ENCODE measurements at regions of chr22 and their contacts with region 1.

Region 1: GRCh38 chr22:46774253-46774979 is 12.0 kb downstream of the TBC1D22A start:
- DNase-seq: peak; percentile 84
- ATAC-seq: peak; percentile 64
- H3K4me3 ChIP-seq: peak overlapping the region; percentile 21 to 49 (median 37)
- H3K4me3 Mint-ChIP-seq: peak overlapping the region; percentile 79
- H3K27ac ChIP-seq: peak overlapping the region; percentile 87 to 91
- H3K27ac Mint-ChIP-seq: peak overlapping the region; percentile 93
- H3K4me1 ChIP-seq: peaks cover 93% of the 10 kb centered on the region in 2 donors
- H3K4me1 Mint-ChIP-seq: peaks cover 89% of the 10 kb centered on the region
- H3K27me3 ChIP-seq: no peaks in the 10 kb centered on the region
- H3K27me3 Mint-ChIP-seq: no peaks in the 10 kb centered on the region
- CTCF ChIP-seq: no peak

Region 2: GRCh38 chr22:46791201-46791731 is 16.9 kb after region 1 on chr22:
- CTCF ChIA-PET with region 1: interaction called, 4 read pairs
- POLR2A ChIA-PET with region 1: interaction called, 3 read pairs
- intact Hi-C with region 1: loop called (anchors 1 kb)
- DNase-seq: peak; percentile 70
- ATAC-seq: peak; percentile 95
- H3K4me3 ChIP-seq: peak overlapping the region in 2 of 5 experiments; percentile 3 to 37
- H3K4me3 Mint-ChIP-seq: peak overlapping the region; percentile 85
- H3K27ac ChIP-seq: peak overlapping the region; percentile 51 to 75
- H3K27ac Mint-ChIP-seq: peak overlapping the region; percentile 95
- H3K4me1 ChIP-seq: peaks cover 33 to 41% of the 10 kb centered on the region in 2 donors
- H3K4me1 Mint-ChIP-seq: peaks cover 51% of the 10 kb centered on the region
- H3K27me3 ChIP-seq: no peaks in the 10 kb centered on the region
- H3K27me3 Mint-ChIP-seq: no peaks in the 10 kb centered on the region
- CTCF ChIP-seq: no peak

Region 3: GRCh38 chr22:46833228-46833627 is 58.8 kb after region 1 on chr22:
- CTCF ChIA-PET with region 1: no interaction called
- POLR2A ChIA-PET with region 1: no interaction called
- intact Hi-C with region 1: no loop called
- DNase-seq: no peak
- ATAC-seq: no peak
- H3K4me3 ChIP-seq: no peak overlapping the region
- H3K4me3 Mint-ChIP-seq: no peak overlapping the region
- H3K27ac ChIP-seq: no peak overlapping the region
- H3K27ac Mint-ChIP-seq: no peak overlapping the region
- H3K4me1 ChIP-seq: peaks cover 0 to 3% of the 10 kb centered on the region in 2 donors
- H3K4me1 Mint-ChIP-seq: peaks cover 28% of the 10 kb centered on the region
- H3K27me3 ChIP-seq: no peaks in the 10 kb centered on the region
- H3K27me3 Mint-ChIP-seq: no peaks in the 10 kb centered on the region
- CTCF ChIP-seq: no peak

Region 4: GRCh38 chr22:47259990-47260389 is 485.6 kb after region 1 on chr22:
- CTCF ChIA-PET with region 1: no interaction called
- POLR2A ChIA-PET with region 1: no interaction called
- intact Hi-C with region 1: no loop called
- DNase-seq: no peak
- ATAC-seq: no peak
- H3K4me3 ChIP-seq: no peak overlapping the region
- H3K4me3 Mint-ChIP-seq: no peak overlapping the region
- H3K27ac ChIP-seq: no peak overlapping the region
- H3K27ac Mint-ChIP-seq: no peak overlapping the region
- H3K4me1 ChIP-seq: no peaks in the 10 kb centered on the region
- H3K4me1 Mint-ChIP-seq: no peaks in the 10 kb centered on the region
- H3K27me3 ChIP-seq: peaks cover 0 to 4% (median 0%) of the 10 kb centered on the region in 4 experiments
- H3K27me3 Mint-ChIP-seq: peaks cover 15% of the 10 kb centered on the region
- CTCF ChIP-seq: no peak

Measured in B cell (primary cell).